ENCODE measurements at regions of chr22 and their contacts with region 1.

Region 1: DNA sequence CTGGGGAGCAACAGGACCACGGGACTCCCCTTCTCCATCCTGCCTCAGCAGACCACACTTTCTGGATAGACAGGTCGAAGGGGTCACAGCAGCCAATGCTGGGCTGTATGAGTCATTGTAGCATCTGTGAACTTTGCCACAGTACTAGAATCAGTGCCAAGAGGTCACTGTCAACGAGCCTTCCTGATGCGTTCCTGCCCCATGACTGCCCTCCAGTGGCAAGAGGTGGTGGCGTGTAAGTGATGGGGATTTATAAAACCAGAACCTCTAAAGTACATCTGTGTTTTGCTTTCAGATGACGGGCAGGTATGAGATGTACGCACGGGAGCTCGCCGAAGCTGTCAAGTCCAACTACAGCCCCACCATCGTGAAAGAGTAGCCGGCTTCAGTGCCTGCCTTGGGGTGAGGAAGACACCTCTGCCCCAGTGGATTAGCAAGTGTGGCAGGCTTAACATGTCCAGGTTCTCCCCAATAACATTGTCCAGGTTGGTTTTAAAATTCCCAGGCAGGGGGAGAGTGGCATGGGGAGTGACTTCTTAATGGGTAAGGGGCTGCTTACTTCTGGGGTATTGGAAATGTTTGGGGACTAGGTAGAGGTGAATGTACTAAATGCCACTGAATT is 29.4 kb downstream of the GUCD1 start:
- DNase-seq: peak; percentile 77
- H3K4me3 Mint-ChIP-seq: no peak overlapping the region
- H3K27ac Mint-ChIP-seq: no peak overlapping the region
- H3K4me1 Mint-ChIP-seq: peaks cover 10% of the 10 kb centered on the region
- H3K27me3 Mint-ChIP-seq: no peaks in the 10 kb centered on the region
- CTCF ChIP-seq: peak; percentile 83

Region 2: DNA sequence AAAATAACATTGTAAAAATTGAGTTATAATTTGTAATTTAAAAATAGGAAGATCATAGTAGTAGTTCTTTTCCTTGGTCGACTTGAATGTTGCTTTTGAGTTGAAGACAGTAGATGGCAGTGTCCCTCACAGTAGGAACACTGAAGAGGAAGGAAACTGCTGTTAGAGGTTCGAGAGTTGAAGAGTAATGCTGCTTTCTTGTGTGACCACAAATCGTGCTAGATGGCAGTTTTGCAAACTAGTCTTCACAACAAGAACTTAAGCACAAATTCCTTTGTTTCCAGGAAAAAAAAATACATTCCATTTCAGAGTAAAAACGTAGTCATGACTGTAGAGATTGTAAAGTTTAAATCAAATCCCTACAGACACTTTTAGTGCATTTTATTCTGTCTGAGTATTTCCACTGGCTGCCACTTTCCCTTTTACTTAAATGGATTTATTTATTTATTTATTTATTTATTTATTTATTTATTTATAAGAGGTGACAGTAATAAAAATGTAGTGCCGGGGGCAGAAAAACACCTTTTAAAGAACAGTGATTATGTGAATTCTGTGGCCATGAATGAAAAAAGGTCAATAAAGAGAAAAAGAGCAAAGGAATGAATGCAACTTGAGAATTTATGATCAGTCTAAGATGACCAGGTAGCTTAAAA is 200.3 kb before region 1 on chr22:
- CTCF ChIA-PET with region 1: interaction called, 3 read pairs
- intact Hi-C with region 1: loop called (anchors 1 kb)
- DNase-seq: peak; percentile 24
- H3K4me3 Mint-ChIP-seq: no peak overlapping the region
- H3K27ac Mint-ChIP-seq: no peak overlapping the region
- H3K4me1 Mint-ChIP-seq: peaks cover 9% of the 10 kb centered on the region
- H3K27me3 Mint-ChIP-seq: no peaks in the 10 kb centered on the region
- CTCF ChIP-seq: no peak

Region 3: DNA sequence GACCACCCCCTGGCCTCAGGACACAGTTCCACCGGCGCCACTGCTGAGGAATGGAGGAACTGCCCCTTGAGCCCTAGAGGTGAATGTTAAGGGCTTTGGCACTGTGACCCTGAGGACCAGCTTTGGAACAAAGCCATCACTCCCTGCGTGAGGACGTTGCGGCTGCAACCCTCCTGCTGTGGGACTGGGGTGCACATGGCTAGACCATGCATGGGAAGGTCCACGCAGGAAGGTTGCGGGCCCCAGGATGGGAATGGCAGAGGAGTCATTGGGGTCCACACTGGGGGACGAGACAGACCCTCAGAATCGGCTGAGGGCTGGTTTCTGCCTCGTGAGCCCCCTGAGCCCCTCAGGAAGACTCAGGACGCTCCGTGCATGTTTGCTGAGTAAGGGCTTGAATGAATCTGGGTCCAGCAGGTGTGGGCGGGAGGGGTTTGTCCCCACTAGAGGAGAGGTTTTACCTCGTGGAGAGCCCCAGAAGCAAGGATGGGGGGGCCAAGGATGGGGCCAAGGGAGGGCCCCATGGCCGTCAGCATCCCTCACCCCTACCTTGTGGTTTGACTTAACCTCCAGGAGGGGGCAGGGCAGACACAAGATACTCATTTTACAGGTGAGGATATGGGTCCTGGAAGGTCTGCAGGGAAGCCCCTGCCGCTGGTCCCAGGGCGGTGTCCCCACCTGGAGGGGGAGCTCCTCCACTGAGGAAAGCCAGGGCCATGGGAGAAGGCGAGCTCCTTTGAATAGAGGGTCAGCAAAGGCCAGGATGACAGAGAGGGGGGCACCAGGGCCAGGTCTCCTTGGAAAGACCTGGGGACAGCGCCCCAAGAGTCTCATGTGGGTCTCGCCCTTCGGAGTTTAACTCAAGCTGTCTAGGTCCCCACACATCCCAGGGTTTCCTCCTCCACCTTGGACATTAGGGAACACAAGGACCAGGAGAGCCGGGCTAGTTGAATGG is 104.3 kb before region 1 on chr22:
- CTCF ChIA-PET with region 1: interaction called, 13 read pairs
- intact Hi-C with region 1: loop called (anchors 1 kb)
- DNase-seq: peak; percentile 49
- H3K4me3 Mint-ChIP-seq: no peak overlapping the region
- H3K27ac Mint-ChIP-seq: no peak overlapping the region
- H3K4me1 Mint-ChIP-seq: no peaks in the 10 kb centered on the region
- H3K27me3 Mint-ChIP-seq: peaks cover 31% of the 10 kb centered on the region
- CTCF ChIP-seq: peak; percentile 44

Region 4: DNA sequence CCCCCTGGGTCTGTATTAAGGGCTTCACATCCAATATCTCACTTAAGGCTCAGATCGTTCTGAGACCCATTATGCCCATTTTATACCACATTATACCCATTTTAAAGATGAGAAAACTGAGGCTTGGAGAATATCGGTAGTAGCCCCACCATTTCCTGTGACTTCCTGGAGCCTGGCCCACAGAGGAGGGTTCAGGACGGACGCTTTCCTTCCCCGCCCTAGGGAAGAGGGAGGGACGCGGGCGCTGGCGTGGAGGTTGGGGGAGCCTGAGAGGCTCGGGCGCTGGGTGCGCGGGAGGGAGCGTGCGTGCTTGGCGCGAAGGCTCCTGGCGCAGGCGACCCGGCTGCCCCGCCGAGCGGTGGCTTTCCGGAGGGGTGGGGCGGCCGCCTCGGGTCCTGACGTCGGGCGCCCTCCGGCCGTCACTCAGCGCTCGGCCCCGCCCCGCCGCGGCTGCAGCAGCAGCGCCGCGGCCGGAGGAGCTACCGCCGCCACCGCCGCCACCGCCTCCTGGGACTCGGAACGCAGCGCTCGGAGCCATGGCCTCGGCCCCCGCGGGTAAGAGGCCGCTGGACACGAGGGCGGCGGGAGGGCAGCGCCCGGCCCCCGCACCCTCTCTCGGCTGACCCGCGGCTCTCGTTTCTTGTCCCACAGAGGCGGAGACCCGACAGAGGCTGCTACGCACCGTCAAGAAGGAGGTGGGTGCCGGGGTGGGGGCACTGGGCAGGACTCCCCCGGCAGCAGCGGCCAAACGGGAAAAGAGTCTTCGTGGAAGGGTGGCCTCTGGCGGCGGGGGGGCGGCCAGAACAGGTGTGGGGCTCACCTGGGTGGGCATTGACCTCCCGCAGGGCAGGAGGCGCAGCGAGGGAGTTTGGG is 280.5 kb after region 1 on chr22 and contains the start of gene SGSM1:
- CTCF ChIA-PET with region 1: interaction called, 10 read pairs
- intact Hi-C with region 1: no loop called
- DNase-seq: peak; percentile 90
- H3K4me3 Mint-ChIP-seq: peak within 1 kb of the TSS; percentile 55
- H3K27ac Mint-ChIP-seq: no peak within 1 kb of the TSS
- H3K4me1 Mint-ChIP-seq: no peaks in the 10 kb centered on the region
- H3K27me3 Mint-ChIP-seq: peaks cover 61% of the 10 kb centered on the region
- CTCF ChIP-seq: no peak
- total RNA-seq, gene SGSM1: 0.07 and 0.20 TPM in 2 replicates

Measured in Calu3 (cell line).